ENCODE measurements at regions of chr2 and their contacts with region 1.

Region 1: GRCh38 chr2:137910641-137911040 is 53.6 kb upstream of the HNMT start:
- H3K4me3 Mint-ChIP-seq: no peak overlapping the region
- H3K27ac Mint-ChIP-seq: no peak overlapping the region
- H3K4me1 Mint-ChIP-seq: no peaks in the 10 kb centered on the region
- H3K27me3 Mint-ChIP-seq: peaks cover 3% of the 10 kb centered on the region

Region 2: GRCh38 chr2:137771064-137771463 is 139.6 kb before region 1 on chr2:
- intact Hi-C with region 1: no loop called
- H3K4me3 Mint-ChIP-seq: no peak overlapping the region
- H3K27ac Mint-ChIP-seq: no peak overlapping the region
- H3K4me1 Mint-ChIP-seq: no peaks in the 10 kb centered on the region
- H3K27me3 Mint-ChIP-seq: no peaks in the 10 kb centered on the region

Region 3: DNA sequence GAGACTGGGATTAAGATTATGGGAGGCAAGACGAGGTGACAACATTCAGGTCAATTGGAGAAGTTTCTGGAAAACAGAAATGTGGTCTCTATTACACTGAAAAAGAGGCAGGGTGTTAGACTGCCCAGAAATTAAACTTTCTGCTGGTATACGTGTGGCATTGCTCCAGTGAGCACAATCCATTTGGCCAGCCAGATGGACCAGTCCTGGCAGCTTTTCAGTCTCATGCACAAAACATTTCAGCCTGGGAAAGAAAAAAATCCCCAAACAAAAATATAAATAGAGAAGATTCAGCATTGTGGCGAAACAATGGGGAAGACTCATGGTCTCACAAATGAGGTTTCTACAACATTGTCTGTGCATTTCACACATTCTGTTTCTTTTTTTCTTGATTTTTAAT is 167.5 kb after region 1 on chr2:
- intact Hi-C with region 1: no loop called
- H3K4me3 Mint-ChIP-seq: no peak overlapping the region
- H3K27ac Mint-ChIP-seq: no peak overlapping the region
- H3K4me1 Mint-ChIP-seq: peaks cover 5% of the 10 kb centered on the region
- H3K27me3 Mint-ChIP-seq: no peaks in the 10 kb centered on the region

Region 4: DNA sequence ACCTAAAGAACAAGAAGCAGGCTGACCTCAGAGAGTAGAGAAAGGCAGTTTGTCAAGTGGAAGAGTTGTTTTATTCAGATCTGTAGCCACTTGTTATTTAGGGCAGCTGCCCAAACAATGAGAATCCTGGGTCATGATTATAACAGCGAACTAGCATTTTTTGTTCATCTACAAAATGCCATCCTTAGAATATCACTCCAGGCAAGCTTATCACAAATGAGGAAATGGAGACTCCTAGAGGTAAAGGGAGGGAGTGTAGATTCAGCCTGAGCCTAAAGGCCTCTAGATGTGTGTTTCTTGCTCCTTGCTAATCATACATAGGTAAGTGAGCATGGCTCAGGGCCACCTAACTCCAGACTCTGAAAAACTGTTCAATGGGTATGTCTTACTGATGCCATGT is 179.7 kb after region 1 on chr2:
- intact Hi-C with region 1: loop called (anchors 1 kb)
- H3K4me3 Mint-ChIP-seq: no peak overlapping the region
- H3K27ac Mint-ChIP-seq: no peak overlapping the region
- H3K4me1 Mint-ChIP-seq: peaks cover 24% of the 10 kb centered on the region
- H3K27me3 Mint-ChIP-seq: no peaks in the 10 kb centered on the region

Region 5: GRCh38 chr2:138373993-138374408 is 463.4 kb after region 1 on chr2:
- intact Hi-C with region 1: loop called (anchors 1 kb)
- H3K4me3 Mint-ChIP-seq: no peak overlapping the region
- H3K27ac Mint-ChIP-seq: no peak overlapping the region
- H3K4me1 Mint-ChIP-seq: no peaks in the 10 kb centered on the region
- H3K27me3 Mint-ChIP-seq: no peaks in the 10 kb centered on the region

Region 6: GRCh38 chr2:138827426-138828054 is 916.9 kb after region 1 on chr2:
- intact Hi-C with region 1: loop called (anchors 1 kb)
- H3K4me3 Mint-ChIP-seq: no peak overlapping the region
- H3K27ac Mint-ChIP-seq: no peak overlapping the region
- H3K4me1 Mint-ChIP-seq: peaks cover 5% of the 10 kb centered on the region
- H3K27me3 Mint-ChIP-seq: no peaks in the 10 kb centered on the region

Measured in dendritic cell treated with granulocyte-macrophage colony-stimulating factor and Interleukin-4, amounts not matched to agents 40 ng/mL and 50 ng/mL, for 4 days (primary cell).